ENCODE measurements at regions of chr3 and their contacts with region 1.

Region 1: GRCh38 chr3:42190701-42191462 is 75.1 kb downstream of the CCK start:
- DNase-seq: peak; percentile 65 to 74
- H3K4me3 ChIP-seq: no peak overlapping the region
- H3K27ac ChIP-seq: no peak overlapping the region
- H3K4me1 ChIP-seq: no peaks in the 10 kb centered on the region
- H3K27me3 ChIP-seq: no peaks in the 10 kb centered on the region
- CTCF ChIP-seq: peak; percentile 65 to 87 (median 80)
- POLR2A ChIP-seq: no peak

Region 2: DNA sequence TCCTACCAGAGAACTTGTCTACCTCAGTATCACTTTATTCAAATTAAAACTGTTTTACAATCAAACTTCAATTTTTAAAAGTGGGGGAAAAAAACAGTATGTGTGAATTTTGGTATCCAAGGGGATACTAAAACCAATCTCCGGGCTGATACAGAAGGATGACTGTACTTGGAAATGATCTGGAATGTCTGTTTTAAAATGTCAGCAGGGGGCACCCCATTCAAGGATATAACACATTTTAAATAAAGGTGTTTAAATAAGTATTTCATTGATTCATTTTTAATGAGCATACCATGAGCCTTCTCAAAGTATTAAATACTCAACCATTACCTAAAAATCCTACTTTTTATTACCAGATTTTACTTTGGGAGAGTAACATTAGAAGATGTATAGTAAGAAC is 296.9 kb before region 1 on chr3:
- intact Hi-C with region 1: loop called (anchors 5 kb)
- DNase-seq: no peak
- H3K4me3 ChIP-seq: no peak overlapping the region
- H3K27ac ChIP-seq: no peak overlapping the region
- H3K4me1 ChIP-seq: no peaks in the 10 kb centered on the region
- H3K27me3 ChIP-seq: no peaks in the 10 kb centered on the region
- CTCF ChIP-seq: peak in 5 of 6 experiments; percentile 20 to 73 (median 55)
- POLR2A ChIP-seq: no peak

Region 3: GRCh38 chr3:42129014-42129953 is 61.6 kb before region 1 on chr3:
- intact Hi-C with region 1: loop called (anchors 5 kb)
- DNase-seq: peak; percentile 26 to 47
- H3K4me3 ChIP-seq: no peak overlapping the region
- H3K27ac ChIP-seq: peak overlapping the region in 2 of 3 donors; percentile 22 to 35
- H3K4me1 ChIP-seq: peaks cover 10 to 13% of the 10 kb centered on the region in 2 donors
- H3K27me3 ChIP-seq: no peaks in the 10 kb centered on the region
- CTCF ChIP-seq: no peak
- POLR2A ChIP-seq: no peak

Region 4: DNA sequence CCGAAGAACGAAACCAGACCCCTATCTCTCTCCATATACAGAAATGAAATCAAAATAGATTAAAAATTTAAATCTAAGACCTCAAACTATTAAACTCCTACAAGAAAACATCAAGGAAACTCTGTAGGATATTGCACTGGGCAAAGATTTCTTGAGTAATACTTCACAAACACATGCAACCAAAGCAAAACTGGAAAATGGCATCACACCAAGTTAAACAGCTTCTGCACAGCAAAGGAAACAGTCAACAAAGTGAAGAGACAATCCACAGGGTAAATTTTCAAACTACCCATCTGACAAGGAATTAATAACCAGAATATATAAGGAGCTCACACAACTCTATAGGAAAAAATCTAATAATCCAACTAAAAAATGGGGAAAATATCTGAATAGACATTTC is 45.7 kb after region 1 on chr3:
- intact Hi-C with region 1: no loop called
- DNase-seq: no peak
- H3K4me3 ChIP-seq: no peak overlapping the region
- H3K27ac ChIP-seq: no peak overlapping the region
- H3K4me1 ChIP-seq: no peaks in the 10 kb centered on the region
- H3K27me3 ChIP-seq: no peaks in the 10 kb centered on the region
- CTCF ChIP-seq: no peak
- POLR2A ChIP-seq: no peak